ENCODE measurements at regions of chr3 and their contacts with region 1.

Region 1: DNA sequence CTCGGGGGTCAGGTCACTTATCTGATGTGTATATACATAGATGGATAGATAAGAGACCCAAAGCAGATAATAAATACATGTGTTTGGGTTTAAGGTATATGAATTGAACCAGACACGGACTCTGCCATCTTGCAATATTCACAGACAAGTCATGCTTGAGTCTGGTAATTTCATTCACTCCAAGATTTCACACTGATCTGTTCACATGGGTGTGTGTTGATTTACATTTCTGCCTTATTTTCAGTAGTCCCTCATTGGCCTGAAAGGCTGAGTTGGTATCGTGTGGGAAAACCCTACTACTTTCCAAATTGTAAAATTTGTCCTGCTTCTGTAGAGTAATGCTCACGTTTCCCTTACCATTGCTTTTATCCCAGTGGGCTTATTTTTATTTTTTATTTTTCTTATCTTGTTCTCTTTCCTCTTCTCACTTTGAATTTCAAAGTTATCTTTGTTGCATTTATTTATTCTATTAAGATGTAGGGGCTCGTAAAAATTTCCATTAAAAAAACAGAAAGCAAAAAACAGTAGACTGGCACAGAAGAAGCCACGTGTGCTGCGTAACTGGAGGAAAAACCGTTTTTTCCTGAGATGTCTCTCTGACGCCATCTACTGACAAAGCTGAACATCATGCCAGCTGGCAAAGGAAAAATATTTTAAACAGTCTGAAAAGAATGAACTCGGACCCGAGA is 10.8 kb upstream of the MFSD1 start:
- DNase-seq: no peak
- ATAC-seq: peak; percentile 71
- H3K4me3 ChIP-seq: peak overlapping the region in 1 of 2 experiments; percentile 8; a peak in 1 of 4 replicates
- H3K27ac ChIP-seq: peak overlapping the region; percentile 90
- H3K4me1 ChIP-seq: peaks cover 42% of the 10 kb centered on the region
- H3K27me3 ChIP-seq: no peaks in the 10 kb centered on the region
- CTCF ChIP-seq: peak; percentile 93

Region 2: DNA sequence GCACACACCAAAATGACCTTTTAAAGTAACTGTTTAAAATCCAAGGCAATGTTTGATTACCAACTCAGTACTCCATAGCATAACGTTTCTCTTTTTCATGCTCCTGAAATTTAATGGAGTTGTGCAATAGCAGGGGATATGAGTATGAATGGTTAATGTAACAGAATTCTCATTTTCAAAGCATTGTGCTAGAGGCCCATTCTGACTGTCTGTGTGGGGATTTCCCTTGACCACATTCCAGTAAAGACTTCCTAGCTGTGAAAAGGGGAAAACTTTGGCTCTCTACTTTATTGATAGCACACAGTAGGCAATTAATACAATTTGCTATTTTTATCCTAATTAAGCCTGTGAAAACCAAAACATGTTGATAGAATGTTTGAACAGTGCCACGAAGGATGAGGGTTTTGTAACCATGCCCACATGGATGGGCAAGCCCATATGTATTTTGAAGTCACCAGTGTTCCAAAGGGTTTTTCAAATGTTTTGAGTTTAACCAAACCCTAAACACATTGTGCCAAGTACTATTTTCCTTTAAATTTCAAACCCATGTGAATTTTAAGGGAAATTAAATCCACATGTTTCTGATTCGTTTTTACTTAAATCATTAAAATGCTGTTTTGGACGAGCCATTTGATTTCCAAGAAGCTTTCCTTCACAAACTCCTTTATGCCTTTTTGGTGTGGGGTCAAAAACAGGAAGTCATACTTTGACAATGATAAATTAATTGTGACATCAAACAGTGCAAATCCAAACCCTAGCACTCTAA is 946.1 kb before region 1 on chr3:
- CTCF ChIA-PET with region 1: interaction called, 10 read pairs
- POLR2A ChIA-PET with region 1: no interaction called
- in situ Hi-C with region 1: no loop called
- intact Hi-C with region 1: no loop called
- DNase-seq: no peak
- ATAC-seq: no peak
- H3K4me3 ChIP-seq: no peak overlapping the region
- H3K27ac ChIP-seq: no peak overlapping the region
- H3K4me1 ChIP-seq: no peaks in the 10 kb centered on the region
- H3K27me3 ChIP-seq: no peaks in the 10 kb centered on the region
- CTCF ChIP-seq: no peak

Region 3: DNA sequence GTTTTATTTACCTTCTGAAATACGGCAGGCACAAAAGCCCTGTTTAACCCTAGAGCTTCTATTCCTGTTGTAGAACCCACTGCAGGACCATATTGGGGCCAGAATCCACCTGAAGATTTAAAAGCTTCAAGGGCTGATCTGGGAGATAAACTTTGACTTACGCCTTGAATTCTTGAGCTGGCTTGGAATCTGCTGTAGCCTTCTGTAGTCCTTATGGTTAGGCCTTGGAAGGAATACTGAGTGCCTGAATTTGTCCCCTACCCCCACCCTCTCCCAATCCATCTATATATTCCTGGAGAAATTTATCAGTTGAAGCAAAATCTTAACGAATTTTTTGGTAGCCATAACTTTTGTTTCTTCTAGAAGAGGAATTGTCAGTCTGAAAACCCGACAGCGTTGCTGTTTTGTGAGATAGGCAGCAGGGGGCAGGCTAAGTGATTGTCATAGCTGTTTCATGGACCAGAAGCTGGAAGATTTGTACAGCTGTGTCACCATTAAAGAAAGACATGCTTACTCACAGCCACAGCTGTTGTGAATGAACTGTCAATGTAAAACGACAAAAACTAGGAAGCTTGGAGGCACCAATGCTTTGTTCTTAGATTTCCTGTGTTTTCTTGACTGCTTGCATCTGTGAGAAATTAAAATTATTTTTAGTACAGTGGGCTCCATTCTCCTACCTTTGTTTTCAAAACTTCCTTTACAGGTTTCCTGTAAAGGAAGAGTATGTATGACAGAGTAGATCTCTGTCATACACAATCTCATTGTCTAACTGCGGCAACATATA is 131.4 kb before region 1 on chr3:
- CTCF ChIA-PET with region 1: interaction called, 19 read pairs
- POLR2A ChIA-PET with region 1: no interaction called
- in situ Hi-C with region 1: no loop called
- intact Hi-C with region 1: loop called (anchors 1 kb)
- DNase-seq: peak; percentile 46
- ATAC-seq: peak; percentile 79
- H3K4me3 ChIP-seq: no peak overlapping the region
- H3K27ac ChIP-seq: peak overlapping the region; percentile 65
- H3K4me1 ChIP-seq: peaks cover 27% of the 10 kb centered on the region
- H3K27me3 ChIP-seq: no peaks in the 10 kb centered on the region
- CTCF ChIP-seq: peak; percentile 88

Region 4: DNA sequence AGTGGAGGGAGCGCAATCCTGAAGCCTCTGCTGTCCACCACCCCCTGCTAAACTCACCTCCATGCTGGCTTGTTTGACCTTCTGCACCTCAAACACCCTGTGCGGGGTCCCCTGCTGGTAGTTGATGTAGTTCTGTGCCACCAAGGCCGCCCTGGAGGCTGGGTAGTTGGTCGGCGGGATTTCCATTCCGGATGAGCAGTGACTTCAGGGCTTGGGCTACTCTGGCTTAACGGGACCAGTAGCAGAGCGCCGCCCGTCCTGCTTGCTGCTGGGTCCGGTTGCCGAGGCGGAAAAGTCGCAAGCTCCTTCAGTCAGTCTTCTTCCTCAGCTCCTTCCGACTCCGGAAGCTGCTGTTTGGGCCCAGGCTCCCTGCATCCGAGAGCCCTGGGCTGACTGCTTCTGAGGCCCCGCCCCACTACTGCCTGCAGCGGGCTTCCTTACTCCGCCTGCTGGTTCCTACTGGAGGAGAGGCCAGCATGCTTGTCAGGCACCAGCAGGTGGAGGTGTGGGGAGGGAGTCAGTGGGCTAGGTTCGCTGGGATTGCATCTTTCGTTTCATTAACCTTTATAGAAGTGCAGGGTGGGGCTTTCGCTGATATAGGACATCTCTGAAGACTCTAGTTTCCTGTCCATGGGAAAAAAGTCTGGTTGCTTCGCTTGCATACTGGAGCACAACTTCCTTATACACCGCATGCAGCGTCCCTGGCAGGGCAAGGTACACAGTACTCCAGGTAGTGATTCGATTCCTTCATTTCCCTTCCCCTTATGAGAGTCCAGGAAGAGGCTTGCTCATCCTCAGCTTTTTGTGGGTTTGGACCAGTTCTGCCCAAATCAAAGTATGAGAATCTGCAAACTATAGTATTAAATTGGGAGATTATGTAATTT is 118.5 kb before region 1 on chr3 and contains the start of gene LXN:
- CTCF ChIA-PET with region 1: interaction called, 7 read pairs
- POLR2A ChIA-PET with region 1: interaction called, 7 read pairs
- in situ Hi-C with region 1: no loop called
- intact Hi-C with region 1: loop called (anchors 1 kb)
- DNase-seq: peak; percentile 71
- ATAC-seq: peak; percentile 99
- H3K4me3 ChIP-seq: peak within 1 kb of the TSS; percentile 67 to 84
- H3K27ac ChIP-seq: peak within 1 kb of the TSS; percentile 89
- H3K4me1 ChIP-seq: peaks cover 41% of the 10 kb centered on the region
- H3K27me3 ChIP-seq: no peaks in the 10 kb centered on the region
- CTCF ChIP-seq: peak; percentile 89
- total RNA-seq, gene LXN: 301 TPM

Region 5: GRCh38 chr3:158727206-158728060 is 63.6 kb before region 1 on chr3:
- CTCF ChIA-PET with region 1: interaction called, 27 read pairs
- POLR2A ChIA-PET with region 1: interaction called, 5 read pairs
- in situ Hi-C with region 1: no loop called
- intact Hi-C with region 1: loop called (anchors 1 kb)
- DNase-seq: no peak
- ATAC-seq: peak; percentile 12; the same call in 1 of the 2 replicates
- H3K4me3 ChIP-seq: no peak overlapping the region
- H3K27ac ChIP-seq: peak overlapping the region; percentile 94
- H3K4me1 ChIP-seq: peaks cover 69% of the 10 kb centered on the region
- H3K27me3 ChIP-seq: no peaks in the 10 kb centered on the region
- CTCF ChIP-seq: peak; percentile 89

Region 6: DNA sequence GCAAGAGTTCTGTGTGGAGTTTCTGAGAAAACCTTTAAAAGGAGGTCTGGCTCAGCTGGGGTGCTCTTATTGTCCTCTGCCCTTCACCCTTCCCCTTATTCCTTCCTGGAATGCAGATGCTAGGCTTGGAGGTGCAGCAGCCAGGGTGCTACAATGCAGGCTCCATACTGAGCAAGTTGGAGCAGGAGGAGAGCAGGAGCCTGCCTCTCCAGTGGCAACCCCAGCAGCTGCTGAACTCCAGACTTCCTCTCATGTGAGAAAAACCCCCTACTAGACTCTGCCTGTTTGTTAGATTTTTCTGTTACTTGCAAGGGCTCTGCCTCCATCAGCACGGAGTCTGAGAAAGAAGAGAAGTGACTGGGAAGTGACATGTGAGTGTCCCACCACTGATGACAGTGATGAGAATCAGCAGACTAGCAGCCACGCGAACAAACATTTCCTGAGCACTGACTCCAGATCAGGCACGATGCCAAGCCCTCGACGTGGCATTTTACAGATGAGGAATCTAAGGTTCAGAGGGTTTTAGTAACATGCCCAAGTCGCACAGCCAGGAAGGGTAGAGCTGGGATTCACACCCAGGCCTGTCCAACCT is 42.7 kb before region 1 on chr3:
- CTCF ChIA-PET with region 1: no interaction called
- POLR2A ChIA-PET with region 1: no interaction called
- in situ Hi-C with region 1: no loop called
- intact Hi-C with region 1: no loop called
- DNase-seq: no peak
- ATAC-seq: 0 out of 2 replicates have a peak, but pooled peaks have one; percentile 17
- H3K4me3 ChIP-seq: no peak overlapping the region
- H3K27ac ChIP-seq: no peak overlapping the region
- H3K4me1 ChIP-seq: no peaks in the 10 kb centered on the region
- H3K27me3 ChIP-seq: no peaks in the 10 kb centered on the region
- CTCF ChIP-seq: no peak

Region 7: GRCh38 chr3:159038405-159038804 is 247.4 kb after region 1 on chr3:
- CTCF ChIA-PET with region 1: no interaction called
- POLR2A ChIA-PET with region 1: no interaction called
- in situ Hi-C with region 1: no loop called
- intact Hi-C with region 1: no loop called
- DNase-seq: no peak
- ATAC-seq: no peak
- H3K4me3 ChIP-seq: no peak overlapping the region
- H3K27ac ChIP-seq: no peak overlapping the region
- H3K4me1 ChIP-seq: no peaks in the 10 kb centered on the region
- H3K27me3 ChIP-seq: no peaks in the 10 kb centered on the region; the same call in 1 of the 2 replicates
- CTCF ChIP-seq: no peak

Measured in Panc1 (cell line).